ENCODE measurements at regions of chr4 and their contacts with region 1.

Region 1: DNA sequence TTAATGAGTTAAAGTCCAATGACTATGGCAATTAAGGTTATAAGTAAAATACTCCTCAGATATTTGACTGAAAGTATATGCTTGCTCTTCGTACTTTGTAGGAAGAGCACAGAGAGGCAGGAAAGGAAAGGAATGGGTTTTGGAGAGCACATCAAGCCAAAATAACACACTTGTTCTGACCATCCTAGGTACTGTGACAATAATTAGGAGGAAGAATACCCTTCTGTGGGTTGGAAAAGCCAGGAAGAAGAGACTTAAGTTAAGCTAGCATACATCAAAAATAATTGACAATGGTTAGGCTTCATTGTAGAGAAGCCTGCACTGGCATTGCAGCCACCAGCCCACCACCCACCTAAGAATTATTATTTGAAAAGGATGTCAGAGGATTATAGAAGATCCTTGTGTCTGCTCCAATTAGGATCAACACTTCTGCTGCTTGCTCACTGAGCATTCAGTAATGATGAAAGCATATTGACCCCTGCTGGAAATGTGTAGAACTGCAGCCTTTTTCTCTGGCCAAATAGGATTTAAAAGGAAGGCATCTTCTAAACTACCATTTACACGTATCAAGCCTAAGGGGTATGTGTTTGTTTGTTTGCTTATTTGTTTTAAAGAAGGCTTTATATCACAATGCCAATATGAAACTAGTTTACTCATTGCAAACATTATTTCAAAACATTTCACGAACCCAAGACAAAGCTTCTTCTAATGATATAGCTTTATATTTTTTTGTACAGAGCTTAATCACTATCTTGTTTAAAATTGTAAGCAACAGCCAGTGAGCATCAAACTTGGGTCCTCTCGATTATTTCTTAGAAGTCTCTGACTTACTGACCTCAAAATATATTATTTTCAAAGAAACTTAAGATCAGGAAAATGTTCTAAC is 286.2 kb upstream of the TET2 start:
- DNase-seq: peak in 1 of 2 donors; percentile 66
- ATAC-seq: peak; percentile 75 to 91 (median 85)
- H3K4me3 ChIP-seq: no peak overlapping the region
- H3K4me3 Mint-ChIP-seq: no peak overlapping the region
- H3K27ac ChIP-seq: no peak overlapping the region
- H3K27ac Mint-ChIP-seq: no peak overlapping the region
- H3K4me1 ChIP-seq: no peaks in the 10 kb centered on the region
- H3K4me1 Mint-ChIP-seq: no peaks in the 10 kb centered on the region
- H3K27me3 ChIP-seq: no peaks in the 10 kb centered on the region
- H3K27me3 Mint-ChIP-seq: peaks cover 0 to 6% of the 10 kb centered on the region in 2 donors
- CTCF ChIP-seq: peak; percentile 92

Region 2: DNA sequence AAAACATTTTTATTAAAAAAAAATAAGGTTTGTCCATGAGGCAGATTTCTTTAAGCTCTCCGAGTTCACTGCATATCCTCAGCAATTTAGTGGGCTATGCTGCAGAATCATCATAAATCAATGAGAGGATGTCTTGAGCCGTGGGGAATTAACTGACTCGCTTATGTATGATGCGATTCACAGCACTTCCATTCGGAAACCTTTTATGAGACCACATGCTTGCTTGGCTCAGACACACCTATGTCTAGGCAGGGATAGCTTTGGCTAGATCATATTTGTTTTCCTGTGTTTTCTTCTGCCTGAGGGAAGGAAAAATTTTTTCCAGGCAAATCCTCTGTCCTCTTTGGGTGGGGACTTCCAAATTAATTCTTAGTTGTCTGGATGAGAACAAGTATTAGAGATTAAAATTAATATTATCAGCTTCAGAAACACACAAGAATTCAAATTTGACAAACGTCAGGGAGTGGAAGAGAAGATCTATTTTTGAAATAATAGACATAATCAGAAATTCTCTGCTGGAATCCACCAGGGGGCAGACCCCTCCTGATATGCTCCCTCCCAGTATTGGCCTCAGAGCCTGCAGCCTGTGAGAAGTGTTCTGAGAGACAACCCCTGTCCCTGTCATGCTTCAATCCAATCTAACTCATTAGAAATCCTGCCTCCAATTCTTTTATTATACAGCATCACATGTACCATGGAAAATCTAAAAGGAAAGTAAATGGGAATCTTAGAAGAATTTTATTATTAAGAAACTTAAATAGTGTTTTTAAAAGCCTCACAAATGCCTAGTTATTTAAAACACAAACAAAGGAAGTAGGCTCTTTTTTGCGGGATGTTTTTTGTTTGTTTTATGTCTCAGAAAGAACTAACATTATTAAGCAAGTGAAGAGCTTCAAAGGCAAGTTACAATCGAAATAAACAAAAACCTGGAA is 795.6 kb before region 1 on chr4:
- intact Hi-C with region 1: loop called (anchors 5 kb)
- DNase-seq: peak in 1 of 2 donors; percentile 5
- ATAC-seq: no peak
- H3K4me3 ChIP-seq: no peak overlapping the region
- H3K4me3 Mint-ChIP-seq: no peak overlapping the region
- H3K27ac ChIP-seq: no peak overlapping the region
- H3K27ac Mint-ChIP-seq: no peak overlapping the region
- H3K4me1 ChIP-seq: no peaks in the 10 kb centered on the region
- H3K4me1 Mint-ChIP-seq: no peaks in the 10 kb centered on the region
- H3K27me3 ChIP-seq: no peaks in the 10 kb centered on the region
- H3K27me3 Mint-ChIP-seq: no peaks in the 10 kb centered on the region
- CTCF ChIP-seq: no peak

Region 3: DNA sequence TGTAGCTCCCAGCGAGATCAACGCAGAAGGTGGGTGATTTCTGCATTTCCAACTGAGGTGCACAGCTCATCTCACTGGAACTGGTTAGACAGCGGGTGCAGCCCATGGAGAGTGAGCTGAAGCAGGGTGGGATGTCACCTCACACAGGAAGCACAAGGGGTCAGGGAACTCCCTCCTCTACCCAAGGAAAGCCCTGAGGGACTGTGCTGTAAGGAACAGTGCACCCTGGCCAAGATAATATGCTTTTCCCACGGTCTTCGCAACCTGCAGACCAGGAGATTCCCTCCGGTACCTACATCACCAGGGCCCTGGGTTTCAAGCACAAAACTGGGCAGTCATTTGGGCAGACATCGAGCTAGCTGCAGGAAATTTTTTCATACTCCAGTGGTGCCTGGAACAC is 69.8 kb after region 1 on chr4:
- intact Hi-C with region 1: no loop called
- DNase-seq: peak in 1 of 2 donors; percentile 8
- ATAC-seq: peak; percentile 50 to 64 (median 52)
- H3K4me3 ChIP-seq: no peak overlapping the region
- H3K4me3 Mint-ChIP-seq: peak overlapping the region; percentile 81
- H3K27ac ChIP-seq: peak overlapping the region; percentile 81
- H3K27ac Mint-ChIP-seq: peak overlapping the region; percentile 89 to 92
- H3K4me1 ChIP-seq: peaks cover 18% of the 10 kb centered on the region
- H3K4me1 Mint-ChIP-seq: peaks cover 48 to 60% of the 10 kb centered on the region in 2 donors
- H3K27me3 ChIP-seq: no peaks in the 10 kb centered on the region
- H3K27me3 Mint-ChIP-seq: no peaks in the 10 kb centered on the region
- CTCF ChIP-seq: no peak